ENCODE measurements at regions of chr2 and their contacts with region 1.

Region 1: GRCh38 chr2:65432227-65433190 is at the start of gene SPRED2:
- DNase-seq: peak; percentile 96
- ATAC-seq: peak; percentile 58
- H3K4me3 ChIP-seq: peak within 1 kb of the TSS; percentile 94 to 98 (median 98)
- H3K27ac ChIP-seq: peak within 1 kb of the TSS; percentile 86
- H3K4me1 ChIP-seq: peaks cover 56% of the 10 kb centered on the region
- H3K27me3 ChIP-seq: no peaks in the 10 kb centered on the region
- CTCF ChIP-seq: peak; percentile 13; the same call in 1 of the 2 replicates
- EP300 ChIP-seq: peak; percentile 73 to 82
- POLR2A ChIP-seq: peak; percentile 73 to 82
- RAD21 ChIP-seq: no peak; the same call in 1 of the 2 replicates
- total RNA-seq, gene SPRED2: 13.0 and 17.7 TPM in 2 replicates

Region 2: GRCh38 chr2:65227425-65228262 is 204.9 kb before region 1 on chr2 and contains the start of gene ACTR2:
- CTCF ChIA-PET with region 1: no interaction called
- POLR2A ChIA-PET with region 1: interaction called, 17 read pairs
- in situ Hi-C with region 1: no loop called
- intact Hi-C with region 1: no loop called
- DNase-seq: peak; percentile 95
- ATAC-seq: peak; percentile 97
- H3K4me3 ChIP-seq: peak within 1 kb of the TSS; percentile 76 to 99 (median 98)
- H3K27ac ChIP-seq: peak within 1 kb of the TSS; percentile 94
- H3K4me1 ChIP-seq: peaks cover 44% of the 10 kb centered on the region
- H3K27me3 ChIP-seq: peaks cover 0 to 3% of the 10 kb centered on the region in 2 experiments; a peak in 1 of 5 replicates
- CTCF ChIP-seq: peak; percentile 13; the same call in 1 of the 2 replicates
- EP300 ChIP-seq: peak in 1 of 2 experiments; percentile 29; a peak in 1 of 4 replicates
- POLR2A ChIP-seq: peak; percentile 90 to 95
- RAD21 ChIP-seq: peak; percentile 66
- total RNA-seq, gene ACTR2: 100 and 211 TPM in 2 replicates

Region 3: GRCh38 chr2:65300761-65301711 is 131.5 kb before region 1 on chr2:
- CTCF ChIA-PET with region 1: no interaction called
- POLR2A ChIA-PET with region 1: interaction called, 31 read pairs
- in situ Hi-C with region 1: no loop called
- intact Hi-C with region 1: loop called (anchors 1 kb)
- DNase-seq: peak; percentile 96
- ATAC-seq: peak; percentile 93
- H3K4me3 ChIP-seq: peak overlapping the region; percentile 55 to 68 (median 58)
- H3K27ac ChIP-seq: peak overlapping the region; percentile 47
- H3K4me1 ChIP-seq: peaks cover 52% of the 10 kb centered on the region
- H3K27me3 ChIP-seq: no peaks in the 10 kb centered on the region
- CTCF ChIP-seq: peak; percentile 41
- EP300 ChIP-seq: peak; percentile 50 to 93; a peak in 2 of 4 replicates
- POLR2A ChIP-seq: no peak
- RAD21 ChIP-seq: 0 out of 2 replicates have a peak, but pooled peaks have one; percentile 19

Region 4: DNA sequence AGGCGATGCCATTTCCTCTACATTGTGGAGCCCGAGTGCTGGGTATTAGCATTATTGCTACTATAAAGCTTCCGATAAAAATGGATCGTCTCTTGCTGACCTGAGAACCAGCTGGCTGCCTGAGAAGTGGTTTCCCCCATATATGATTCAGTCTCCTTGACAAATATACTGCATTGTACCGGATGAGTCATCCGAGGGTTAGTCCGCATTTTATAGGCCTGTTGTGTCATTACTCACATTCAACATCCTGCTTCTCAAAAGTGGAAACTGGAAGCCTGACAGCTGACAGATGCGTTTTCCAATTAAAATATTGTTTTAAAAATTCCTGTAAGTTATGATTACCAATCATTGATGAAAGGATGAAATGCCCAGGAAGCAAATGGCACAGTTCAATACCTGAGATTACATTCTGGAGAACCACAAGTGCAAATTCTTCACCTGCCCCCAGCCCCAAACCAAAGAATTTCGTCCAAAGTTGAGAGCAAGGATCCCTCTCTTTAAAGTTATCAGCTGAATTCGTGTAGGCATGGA is 65.8 kb before region 1 on chr2:
- CTCF ChIA-PET with region 1: no interaction called
- POLR2A ChIA-PET with region 1: interaction called, 66 read pairs
- in situ Hi-C with region 1: no loop called
- intact Hi-C with region 1: loop called (anchors 1 kb)
- DNase-seq: peak; percentile 77
- ATAC-seq: no peak
- H3K4me3 ChIP-seq: no peak overlapping the region
- H3K27ac ChIP-seq: peak overlapping the region; percentile 11
- H3K4me1 ChIP-seq: peaks cover 100% of the 10 kb centered on the region
- H3K27me3 ChIP-seq: no peaks in the 10 kb centered on the region
- CTCF ChIP-seq: no peak
- EP300 ChIP-seq: peak in 1 of 2 experiments; percentile 31; a peak in 1 of 4 replicates
- POLR2A ChIP-seq: no peak
- RAD21 ChIP-seq: no peak

Region 5: DNA sequence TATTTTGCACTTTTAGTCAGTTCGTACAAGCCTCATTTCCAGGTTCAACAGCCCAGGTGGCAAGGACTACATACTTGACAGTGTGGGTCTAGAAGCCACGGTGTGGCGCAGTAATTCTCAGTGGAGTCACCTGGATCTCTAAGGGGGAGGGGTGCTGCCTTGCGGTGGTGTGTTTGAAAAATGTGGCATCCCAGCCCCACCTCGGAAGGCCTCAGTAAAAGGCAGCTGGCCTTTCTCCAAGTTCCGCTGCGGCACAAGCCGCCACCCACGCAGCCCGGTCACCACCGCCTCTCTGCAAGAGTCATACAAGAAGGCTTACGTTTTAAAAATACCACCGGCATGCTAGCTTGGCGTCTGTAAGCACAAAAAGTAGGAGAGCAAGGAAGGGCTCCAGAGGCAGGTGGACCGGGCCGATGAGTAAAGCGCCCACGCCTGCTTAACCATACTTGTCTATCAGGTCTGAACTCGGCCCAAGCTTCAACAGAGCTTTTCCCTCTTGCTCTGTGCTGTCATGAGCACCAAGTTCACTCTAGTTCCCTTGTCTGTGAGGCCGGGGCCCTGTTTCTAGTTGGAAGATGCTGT is 49.6 kb before region 1 on chr2:
- CTCF ChIA-PET with region 1: no interaction called
- POLR2A ChIA-PET with region 1: interaction called, 16 read pairs
- in situ Hi-C with region 1: loop called (anchors 5 kb)
- intact Hi-C with region 1: loop called (anchors 1 kb)
- DNase-seq: peak; percentile 86
- ATAC-seq: peak; percentile 73
- H3K4me3 ChIP-seq: peak overlapping the region in 1 of 3 experiments; percentile 47; a peak in 3 of 6 replicates
- H3K27ac ChIP-seq: peak overlapping the region; percentile 59
- H3K4me1 ChIP-seq: peaks cover 99% of the 10 kb centered on the region
- H3K27me3 ChIP-seq: no peaks in the 10 kb centered on the region
- CTCF ChIP-seq: peak; percentile 70
- EP300 ChIP-seq: peak in 1 of 2 experiments; percentile 66; a peak in 2 of 4 replicates
- POLR2A ChIP-seq: no peak
- RAD21 ChIP-seq: peak; percentile 61

Region 6: GRCh38 chr2:65450393-65450792 is 17.9 kb after region 1 on chr2:
- CTCF ChIA-PET with region 1: no interaction called
- POLR2A ChIA-PET with region 1: interaction called, 12 read pairs
- in situ Hi-C with region 1: no loop called
- intact Hi-C with region 1: no loop called
- DNase-seq: no peak
- ATAC-seq: peak; percentile 27; the same call in 2 of the 3 replicates
- H3K4me3 ChIP-seq: no peak overlapping the region
- H3K27ac ChIP-seq: no peak overlapping the region
- H3K4me1 ChIP-seq: peaks cover 23% of the 10 kb centered on the region
- H3K27me3 ChIP-seq: no peaks in the 10 kb centered on the region
- CTCF ChIP-seq: no peak
- EP300 ChIP-seq: no peak
- POLR2A ChIP-seq: no peak
- RAD21 ChIP-seq: no peak

Region 7: GRCh38 chr2:65554765-65555591 is 122.5 kb after region 1 on chr2:
- CTCF ChIA-PET with region 1: no interaction called
- POLR2A ChIA-PET with region 1: no interaction called
- in situ Hi-C with region 1: loop called (anchors 10 kb)
- intact Hi-C with region 1: loop called (anchors 1 kb)
- DNase-seq: no peak
- ATAC-seq: no peak
- H3K4me3 ChIP-seq: no peak overlapping the region
- H3K27ac ChIP-seq: no peak overlapping the region
- H3K4me1 ChIP-seq: peaks cover 11% of the 10 kb centered on the region; the same call in 1 of the 2 replicates
- H3K27me3 ChIP-seq: 0 out of 5 replicates have a peak, but pooled peaks cover 0 to 9% of the 10 kb centered on the region in 2 experiments
- CTCF ChIP-seq: no peak
- EP300 ChIP-seq: no peak
- POLR2A ChIP-seq: no peak
- RAD21 ChIP-seq: no peak

Measured in HepG2 (cell line).